K562 (cell line): ENCODE measurements at regions of chr10 and their contacts with region 1.

Region 1: GRCh38 chr10:68720793-68721672 is at the start of gene CCAR1:
- DNase-seq: peak; percentile 96 to 99 (median 98)
- ATAC-seq: peak; percentile 96
- H3K4me3 ChIP-seq: peak within 1 kb of the TSS; percentile 82
- H3K27ac ChIP-seq: peak within 1 kb of the TSS; percentile 90
- H3K4me1 ChIP-seq: peaks cover 0 to 21% of the 10 kb centered on the region in 2 experiments; a peak in 3 of 5 replicates
- H3K27me3 ChIP-seq: no peaks in the 10 kb centered on the region
- CTCF ChIP-seq: 0 out of 6 replicates have a peak, but pooled peaks of 1 of the 3 experiments have one; percentile 1
- EP300 ChIP-seq: no peak
- POLR2A ChIP-seq: peak; percentile 97
- RAD21 ChIP-seq: no peak
- polyA plus RNA-seq, gene CCAR1: 44.8 to 68.5 TPM

Region 2: GRCh38 chr10:68550747-68551411 is 170.2 kb before region 1 on chr10:
- CTCF ChIA-PET with region 1: no interaction called
- POLR2A ChIA-PET with region 1: interaction called, 5 read pairs
- in situ Hi-C with region 1: no loop called
- intact Hi-C with region 1: loop called (anchors 2 kb)
- DNase-seq: peak; percentile 72 to 91 (median 76)
- ATAC-seq: peak; percentile 78
- H3K4me3 ChIP-seq: no peak overlapping the region
- H3K27ac ChIP-seq: no peak overlapping the region
- H3K4me1 ChIP-seq: peaks cover 17 to 20% of the 10 kb centered on the region in 2 experiments
- H3K27me3 ChIP-seq: no peaks in the 10 kb centered on the region
- CTCF ChIP-seq: peak; percentile 80 to 95 (median 95)
- EP300 ChIP-seq: no peak
- POLR2A ChIP-seq: no peak
- RAD21 ChIP-seq: peak; percentile 77 to 90

Region 3: DNA sequence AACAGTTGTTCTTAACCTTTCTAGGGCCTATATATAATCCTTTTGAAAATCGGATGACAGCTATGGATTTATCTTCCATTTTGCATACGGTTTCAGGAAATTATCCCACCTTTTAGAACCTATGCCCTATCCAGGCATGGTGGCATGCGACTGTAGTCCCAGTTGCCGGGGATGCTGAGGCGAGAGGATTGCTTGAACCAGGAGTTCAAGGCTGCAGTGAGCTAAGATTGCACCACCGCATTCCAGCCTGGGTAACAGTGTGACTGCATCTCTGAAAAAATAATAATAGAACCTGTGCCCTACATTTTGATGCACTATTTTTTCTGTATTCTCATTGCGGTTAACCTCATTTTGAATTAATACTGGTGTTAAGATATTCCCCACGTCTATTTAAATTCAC is 11.6 kb after region 1 on chr10:
- CTCF ChIA-PET with region 1: no interaction called
- POLR2A ChIA-PET with region 1: interaction called, 15 read pairs
- in situ Hi-C with region 1: no loop called
- intact Hi-C with region 1: no loop called
- DNase-seq: no peak
- ATAC-seq: no peak
- H3K4me3 ChIP-seq: no peak overlapping the region
- H3K27ac ChIP-seq: no peak overlapping the region
- H3K4me1 ChIP-seq: no peaks in the 10 kb centered on the region; a peak in 1 of 5 replicates
- H3K27me3 ChIP-seq: no peaks in the 10 kb centered on the region
- CTCF ChIP-seq: no peak
- EP300 ChIP-seq: no peak
- POLR2A ChIP-seq: no peak
- RAD21 ChIP-seq: no peak

Region 4: GRCh38 chr10:68811314-68812009 is 90.4 kb after region 1 on chr10:
- CTCF ChIA-PET with region 1: no interaction called
- POLR2A ChIA-PET with region 1: no interaction called
- in situ Hi-C with region 1: no loop called
- intact Hi-C with region 1: no loop called
- DNase-seq: peak in 1 of 4 experiments; percentile 24
- ATAC-seq: peak; percentile 64
- H3K4me3 ChIP-seq: no peak overlapping the region
- H3K27ac ChIP-seq: peak overlapping the region; percentile 74; the same call in 1 of the 3 replicates
- H3K4me1 ChIP-seq: peaks cover 11 to 17% of the 10 kb centered on the region in 2 experiments
- H3K27me3 ChIP-seq: no peaks in the 10 kb centered on the region
- CTCF ChIP-seq: no peak
- EP300 ChIP-seq: no peak
- POLR2A ChIP-seq: no peak
- RAD21 ChIP-seq: no peak

Region 5: GRCh38 chr10:68831961-68832459 is 111.0 kb after region 1 on chr10:
- CTCF ChIA-PET with region 1: no interaction called
- POLR2A ChIA-PET with region 1: no interaction called
- in situ Hi-C with region 1: no loop called
- intact Hi-C with region 1: no loop called
- DNase-seq: no peak
- ATAC-seq: no peak
- H3K4me3 ChIP-seq: no peak overlapping the region
- H3K27ac ChIP-seq: no peak overlapping the region
- H3K4me1 ChIP-seq: peaks cover 0 to 11% of the 10 kb centered on the region in 2 experiments; a peak in 3 of 5 replicates
- H3K27me3 ChIP-seq: peaks cover 48 to 56% of the 10 kb centered on the region in 2 experiments
- CTCF ChIP-seq: no peak
- EP300 ChIP-seq: no peak
- POLR2A ChIP-seq: no peak
- RAD21 ChIP-seq: no peak

Region 6: GRCh38 chr10:68861253-68861652 is 140.2 kb after region 1 on chr10:
- CTCF ChIA-PET with region 1: no interaction called
- POLR2A ChIA-PET with region 1: no interaction called
- in situ Hi-C with region 1: no loop called
- intact Hi-C with region 1: no loop called
- DNase-seq: peak in 1 of 4 experiments; percentile 34
- ATAC-seq: no peak
- H3K4me3 ChIP-seq: no peak overlapping the region
- H3K27ac ChIP-seq: no peak overlapping the region
- H3K4me1 ChIP-seq: no peaks in the 10 kb centered on the region
- H3K27me3 ChIP-seq: no peaks in the 10 kb centered on the region
- CTCF ChIP-seq: no peak
- EP300 ChIP-seq: no peak
- POLR2A ChIP-seq: no peak
- RAD21 ChIP-seq: no peak